CD8-positive, alpha-beta T cell (primary cell): ENCODE measurements at regions of chr12 and their contacts with region 1.

Region 1: GRCh38 chr12:118175823-118176447 is 40.0 kb downstream of the PEBP1 start:
- DNase-seq: peak in 1 of 9 experiments; percentile 11
- ATAC-seq: no peak
- H3K4me3 ChIP-seq: no peak overlapping the region
- H3K4me3 Mint-ChIP-seq: no peak overlapping the region
- H3K27ac ChIP-seq: no peak overlapping the region
- H3K27ac Mint-ChIP-seq: no peak overlapping the region
- H3K4me1 ChIP-seq: no peaks in the 10 kb centered on the region
- H3K4me1 Mint-ChIP-seq: no peaks in the 10 kb centered on the region
- H3K27me3 ChIP-seq: no peaks in the 10 kb centered on the region
- H3K27me3 Mint-ChIP-seq: no peaks in the 10 kb centered on the region
- CTCF ChIP-seq: no peak

Region 2: GRCh38 chr12:118377884-118378470 is 202.0 kb after region 1 on chr12:
- CTCF ChIA-PET with region 1: interaction called, 67 read pairs
- POLR2A ChIA-PET with region 1: interaction called, 4 read pairs
- intact Hi-C with region 1: no loop called
- DNase-seq: peak; percentile 58 to 87 (median 71)
- ATAC-seq: no peak
- H3K4me3 ChIP-seq: peak overlapping the region; percentile 69 to 75
- H3K4me3 Mint-ChIP-seq: peak overlapping the region; percentile 88
- H3K27ac ChIP-seq: peak overlapping the region in 1 of 2 experiments; percentile 57
- H3K27ac Mint-ChIP-seq: peak overlapping the region; percentile 91
- H3K4me1 ChIP-seq: peaks cover 24% of the 10 kb centered on the region
- H3K4me1 Mint-ChIP-seq: peaks cover 42% of the 10 kb centered on the region
- H3K27me3 ChIP-seq: no peaks in the 10 kb centered on the region
- H3K27me3 Mint-ChIP-seq: no peaks in the 10 kb centered on the region
- CTCF ChIP-seq: peak; percentile 98